MCF 10A (cell line): ENCODE measurements at regions of chr14 and their contacts with region 1.

Region 1: DNA sequence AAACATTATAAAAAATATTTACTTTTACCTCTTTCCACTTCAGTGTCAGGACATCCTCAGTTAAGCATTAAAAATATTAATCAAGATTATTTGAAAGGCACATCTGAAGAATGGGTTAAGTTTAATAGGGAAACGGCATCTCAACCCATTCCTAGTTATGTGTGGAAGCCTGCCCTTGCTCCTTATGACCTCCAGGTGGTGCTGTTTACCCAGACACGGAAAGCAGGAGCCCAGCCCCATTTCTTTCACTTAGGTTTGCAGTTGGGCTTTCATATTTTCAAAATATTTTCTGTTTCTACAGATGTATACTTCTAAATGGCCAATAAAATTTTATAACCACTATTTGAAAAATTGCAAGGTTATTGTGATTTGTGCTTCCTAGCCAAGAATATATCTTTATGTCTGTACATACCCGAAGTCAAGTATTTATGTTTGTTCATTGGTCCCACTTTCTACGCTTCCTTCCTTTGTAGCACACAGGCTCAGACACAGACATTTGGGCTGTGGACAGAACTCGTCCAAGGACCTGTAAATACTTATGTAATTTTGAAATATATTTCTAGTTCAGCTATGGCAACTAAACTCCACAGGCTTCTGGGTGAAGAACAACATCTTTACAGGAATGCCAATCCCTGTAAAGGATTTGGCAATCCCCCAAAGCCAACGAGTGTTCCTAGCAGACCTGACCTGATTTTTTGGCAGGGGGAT is 247.1 kb downstream of the AKAP6 start:
- DNase-seq: peak; percentile 73
- H3K4me3 Mint-ChIP-seq: no peak overlapping the region
- H3K27ac Mint-ChIP-seq: no peak overlapping the region
- H3K4me1 Mint-ChIP-seq: no peaks in the 10 kb centered on the region
- H3K27me3 Mint-ChIP-seq: peaks cover 13% of the 10 kb centered on the region
- CTCF ChIP-seq: peak; percentile 97

Region 2: DNA sequence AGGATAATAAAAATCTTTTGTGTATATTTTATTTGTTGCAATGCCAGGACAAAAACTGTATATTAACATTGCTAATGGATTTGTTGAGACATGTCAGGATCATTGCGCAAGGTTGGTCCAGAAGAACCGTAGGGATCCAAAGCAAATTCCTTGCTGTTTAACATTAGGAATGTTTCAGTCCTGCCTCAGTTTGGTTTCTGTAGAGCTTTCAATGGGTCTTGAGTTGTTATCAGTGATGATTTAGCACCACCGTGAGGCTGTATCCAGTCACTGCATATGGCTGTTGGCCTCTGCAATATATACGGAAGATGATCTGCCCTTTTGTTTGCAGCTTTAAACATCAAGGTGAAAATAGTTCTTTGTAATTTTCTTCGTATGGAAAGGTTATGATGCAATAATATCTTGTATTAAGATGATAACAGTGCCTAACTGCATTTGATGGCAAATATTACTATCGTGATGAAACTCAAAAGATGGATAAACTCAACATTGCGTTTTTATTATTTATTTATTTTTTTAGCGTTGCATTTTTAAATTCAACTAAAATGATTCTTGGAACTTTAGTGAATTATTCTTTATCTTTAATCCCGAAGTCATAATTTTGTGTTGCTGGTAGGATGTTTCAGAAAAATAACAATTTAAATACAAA is 15.9 kb before region 1 on chr14:
- CTCF ChIA-PET with region 1: interaction called, 15 read pairs
- POLR2A ChIA-PET with region 1: no interaction called
- intact Hi-C with region 1: no loop called
- DNase-seq: peak; percentile 85
- H3K4me3 Mint-ChIP-seq: no peak overlapping the region
- H3K27ac Mint-ChIP-seq: no peak overlapping the region
- H3K4me1 Mint-ChIP-seq: peaks cover 10% of the 10 kb centered on the region
- H3K27me3 Mint-ChIP-seq: no peaks in the 10 kb centered on the region
- CTCF ChIP-seq: peak; percentile 77

Region 3: GRCh38 chr14:33432407-33433023 is 856.3 kb after region 1 on chr14:
- CTCF ChIA-PET with region 1: interaction called, 4 read pairs
- POLR2A ChIA-PET with region 1: no interaction called
- intact Hi-C with region 1: loop called (anchors 2 kb)
- DNase-seq: peak; percentile 56
- H3K4me3 Mint-ChIP-seq: no peak overlapping the region
- H3K27ac Mint-ChIP-seq: no peak overlapping the region
- H3K4me1 Mint-ChIP-seq: peaks cover 13% of the 10 kb centered on the region
- H3K27me3 Mint-ChIP-seq: no peaks in the 10 kb centered on the region
- CTCF ChIP-seq: peak; percentile 53

Region 4: GRCh38 chr14:33839193-33840076 is 1263.2 kb after region 1 on chr14:
- CTCF ChIA-PET with region 1: interaction called, 4 read pairs
- POLR2A ChIA-PET with region 1: no interaction called
- intact Hi-C with region 1: loop called (anchors 2 kb)
- DNase-seq: peak; percentile 56
- H3K4me3 Mint-ChIP-seq: no peak overlapping the region
- H3K27ac Mint-ChIP-seq: no peak overlapping the region
- H3K4me1 Mint-ChIP-seq: peaks cover 11% of the 10 kb centered on the region
- H3K27me3 Mint-ChIP-seq: no peaks in the 10 kb centered on the region
- CTCF ChIP-seq: peak; percentile 76

Region 5: GRCh38 chr14:34300882-34301734 is 1724.9 kb after region 1 on chr14:
- CTCF ChIA-PET with region 1: interaction called, 9 read pairs
- POLR2A ChIA-PET with region 1: no interaction called
- intact Hi-C with region 1: loop called (anchors 1 kb)
- DNase-seq: peak; percentile 73
- H3K4me3 Mint-ChIP-seq: no peak overlapping the region
- H3K27ac Mint-ChIP-seq: peak overlapping the region; percentile 57
- H3K4me1 Mint-ChIP-seq: peaks cover 18% of the 10 kb centered on the region
- H3K27me3 Mint-ChIP-seq: no peaks in the 10 kb centered on the region
- CTCF ChIP-seq: peak; percentile 76